Activated B cell treated with CpG ODN at 0.5 μM for 24 hours (primary cell): ENCODE measurements at regions of chr19 and their contacts with region 1.

Region 1: GRCh38 chr19:11435058-11435832 is at the starts of genes ODAD3 and PRKCSH:
- DNase-seq: peak; percentile 95
- ATAC-seq: peak; percentile 88
- H3K4me3 Mint-ChIP-seq: peak within 1 kb of the TSS; percentile 100
- H3K27ac Mint-ChIP-seq: peak within 1 kb of the TSS; percentile 95
- H3K4me1 Mint-ChIP-seq: peaks cover 41% of the 10 kb centered on the region
- H3K27me3 Mint-ChIP-seq: no peaks in the 10 kb centered on the region
- CTCF ChIP-seq: peak; percentile 85
- total RNA-seq, gene ODAD3: 0.29 TPM in 1 of 2 replicates, not detected in the other
- total RNA-seq, gene PRKCSH: 287 and 289 TPM in 2 replicates

Region 2: DNA sequence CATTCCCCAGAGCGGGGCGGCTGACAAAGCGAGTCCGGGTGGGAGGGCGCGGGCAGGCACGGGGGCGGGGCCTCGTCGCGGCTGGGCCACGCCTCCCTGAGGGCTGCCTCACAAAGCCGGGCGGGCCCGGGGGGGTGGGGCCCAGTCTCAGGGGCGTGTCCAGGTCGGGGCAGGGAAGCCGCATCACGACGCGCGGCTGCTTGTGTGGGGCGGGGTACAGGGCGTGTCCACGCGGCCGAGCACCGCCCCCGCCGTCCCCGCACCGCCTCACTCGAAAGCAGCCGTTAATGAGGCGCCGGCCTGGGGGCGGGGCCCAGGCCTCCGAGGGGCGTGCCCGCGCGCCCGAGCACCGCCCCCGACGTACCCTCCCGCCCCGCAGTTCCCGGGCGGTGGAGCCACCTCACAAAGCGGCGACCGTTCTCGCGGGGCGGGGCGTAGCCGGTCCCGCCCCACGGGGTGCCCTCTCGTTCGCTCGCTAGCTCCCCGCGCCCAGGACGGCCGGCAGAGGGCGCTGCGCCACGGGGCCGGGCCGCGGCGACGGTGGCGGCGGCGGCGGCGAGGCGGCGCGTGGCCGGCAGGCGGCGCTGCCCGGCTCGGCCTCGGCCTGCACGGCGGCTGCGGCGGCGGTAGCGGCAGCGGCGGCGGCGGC is 564.2 kb before region 1 on chr19 and contains the start of gene CARM1:
- CTCF ChIA-PET with region 1: no interaction called
- POLR2A ChIA-PET with region 1: no interaction called
- intact Hi-C with region 1: loop called (anchors 2 kb)
- DNase-seq: peak; percentile 100
- ATAC-seq: peak; percentile 84
- H3K4me3 Mint-ChIP-seq: peak within 1 kb of the TSS; percentile 83
- H3K27ac Mint-ChIP-seq: peak within 1 kb of the TSS; percentile 88
- H3K4me1 Mint-ChIP-seq: peaks cover 44% of the 10 kb centered on the region
- H3K27me3 Mint-ChIP-seq: no peaks in the 10 kb centered on the region
- CTCF ChIP-seq: no peak
- total RNA-seq, gene CARM1: 32.3 and 39.1 TPM in 2 replicates

Region 3: GRCh38 chr19:11279496-11280236 is 155.6 kb before region 1 on chr19:
- CTCF ChIA-PET with region 1: no interaction called
- POLR2A ChIA-PET with region 1: interaction called, 13 read pairs
- intact Hi-C with region 1: no loop called
- DNase-seq: no peak
- ATAC-seq: no peak
- H3K4me3 Mint-ChIP-seq: no peak overlapping the region
- H3K27ac Mint-ChIP-seq: no peak overlapping the region
- H3K4me1 Mint-ChIP-seq: peaks cover 6% of the 10 kb centered on the region
- H3K27me3 Mint-ChIP-seq: peaks cover 23% of the 10 kb centered on the region
- CTCF ChIP-seq: no peak

Region 4: DNA sequence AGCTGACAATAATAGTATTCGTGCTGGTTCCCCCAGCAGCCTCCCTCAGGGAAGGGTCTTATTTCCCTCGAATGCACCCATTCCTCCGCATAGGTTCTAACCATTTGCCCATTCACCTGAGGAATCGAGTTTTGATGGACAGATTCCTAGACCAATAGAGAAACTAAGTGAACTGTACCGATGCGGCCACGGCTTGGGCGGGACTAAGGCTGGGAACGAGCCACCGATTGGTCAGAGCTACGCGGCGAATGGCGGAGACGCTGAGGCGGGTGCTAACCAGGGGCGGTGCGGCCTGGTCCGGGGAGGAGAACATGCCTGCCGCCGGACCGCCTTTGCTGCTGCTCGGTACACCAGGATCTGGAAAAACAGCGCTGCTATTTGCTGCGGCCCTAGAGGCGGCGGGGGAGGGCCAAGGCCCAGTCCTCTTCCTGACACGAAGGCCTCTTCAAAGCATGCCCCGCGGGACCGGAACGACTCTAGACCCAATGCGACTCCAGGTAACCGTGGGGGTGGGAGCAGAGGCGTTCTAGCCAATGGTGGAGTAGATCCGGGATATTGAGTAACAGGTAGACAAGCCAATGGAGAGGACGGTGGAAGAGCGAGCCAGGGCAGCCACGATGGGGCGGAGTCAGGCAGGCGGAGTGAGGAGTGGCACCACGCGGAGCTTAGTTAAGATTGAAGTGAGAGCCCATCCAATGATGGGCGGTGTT is 60.7 kb before region 1 on chr19 and contains the start of gene SWSAP1:
- CTCF ChIA-PET with region 1: no interaction called
- POLR2A ChIA-PET with region 1: interaction called, 35 read pairs
- intact Hi-C with region 1: loop called (anchors 1 kb)
- DNase-seq: peak; percentile 93
- ATAC-seq: peak; percentile 89
- H3K4me3 Mint-ChIP-seq: no peak within 1 kb of the TSS
- H3K27ac Mint-ChIP-seq: no peak within 1 kb of the TSS
- H3K4me1 Mint-ChIP-seq: peaks cover 17% of the 10 kb centered on the region
- H3K27me3 Mint-ChIP-seq: no peaks in the 10 kb centered on the region
- CTCF ChIP-seq: no peak
- total RNA-seq, gene SWSAP1: 4.3 and 5.1 TPM in 2 replicates

Region 5: DNA sequence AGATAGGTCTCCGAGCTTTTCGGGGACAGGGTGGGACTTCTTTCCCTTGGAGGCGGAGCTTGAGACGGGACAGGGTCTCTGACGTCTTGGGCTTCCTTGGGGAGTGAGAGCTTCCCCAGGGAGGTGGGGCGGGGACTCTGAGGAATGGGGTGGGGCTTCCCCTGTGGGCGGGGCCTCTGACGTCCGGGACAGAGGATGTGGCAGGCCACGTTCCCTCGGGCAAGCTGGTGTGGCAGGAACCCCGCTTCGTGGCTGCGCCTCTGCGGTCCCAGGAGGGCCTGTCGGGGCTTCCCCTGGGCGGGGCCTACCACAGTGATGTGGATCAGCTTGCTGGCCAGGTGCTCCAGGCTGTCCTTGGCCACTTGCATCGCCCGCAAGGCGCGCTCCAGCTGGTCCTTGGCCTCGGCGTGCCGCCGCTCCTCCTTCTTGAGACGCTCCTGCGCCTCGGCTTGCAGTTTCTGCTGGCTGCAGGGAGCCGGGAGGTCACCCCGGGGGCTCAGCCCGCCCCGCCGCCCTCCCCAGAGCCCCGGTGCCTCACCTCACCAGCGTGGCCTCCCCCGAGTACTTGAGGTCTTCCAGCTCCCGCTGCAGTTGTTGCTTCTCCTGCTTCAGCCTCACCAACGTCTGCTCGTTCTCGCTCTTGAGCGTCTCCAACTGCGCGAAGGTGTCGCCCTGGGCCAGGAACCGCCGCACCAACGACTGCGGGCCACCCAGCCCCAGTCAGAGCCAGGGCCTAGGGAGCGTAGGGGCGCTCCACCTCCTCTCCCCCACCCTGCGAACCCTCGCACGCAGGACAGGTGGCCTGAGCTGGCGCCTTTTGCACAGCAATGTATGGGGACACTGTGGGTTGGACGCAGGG is 12.9 kb before region 1 on chr19:
- CTCF ChIA-PET with region 1: interaction called, 9 read pairs
- POLR2A ChIA-PET with region 1: interaction called, 46 read pairs
- intact Hi-C with region 1: loop called (anchors 1 kb)
- DNase-seq: peak; percentile 89
- ATAC-seq: peak; percentile 84
- H3K4me3 Mint-ChIP-seq: peak overlapping the region; percentile 81
- H3K27ac Mint-ChIP-seq: peak overlapping the region; percentile 66
- H3K4me1 Mint-ChIP-seq: peaks cover 54% of the 10 kb centered on the region
- H3K27me3 Mint-ChIP-seq: peaks cover 18% of the 10 kb centered on the region
- CTCF ChIP-seq: no peak

Region 6: DNA sequence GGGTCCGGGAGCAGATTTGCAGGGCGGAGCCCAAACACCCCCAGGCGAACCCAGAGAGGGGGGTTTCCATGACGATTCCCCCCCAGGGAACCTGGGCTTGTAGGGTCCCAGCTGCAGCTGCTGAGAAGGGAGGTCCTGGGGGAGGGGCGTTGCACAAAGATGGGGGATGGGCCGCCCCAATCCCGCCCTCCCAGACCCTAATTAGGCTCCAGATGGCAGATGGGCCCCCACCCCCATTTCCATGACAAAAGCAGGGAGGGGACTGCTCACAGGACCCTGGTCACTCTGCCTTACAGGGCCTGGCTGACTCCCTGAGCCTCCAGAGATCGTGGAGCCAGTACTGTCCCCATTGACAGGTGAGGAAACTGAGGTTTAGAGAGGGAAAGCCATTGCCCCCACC is 30.4 kb after region 1 on chr19:
- CTCF ChIA-PET with region 1: no interaction called
- POLR2A ChIA-PET with region 1: no interaction called
- intact Hi-C with region 1: no loop called
- DNase-seq: no peak
- ATAC-seq: no peak
- H3K4me3 Mint-ChIP-seq: no peak overlapping the region
- H3K27ac Mint-ChIP-seq: no peak overlapping the region
- H3K4me1 Mint-ChIP-seq: no peaks in the 10 kb centered on the region
- H3K27me3 Mint-ChIP-seq: peaks cover 7% of the 10 kb centered on the region
- CTCF ChIP-seq: no peak

Region 7: GRCh38 chr19:11505032-11505503 is 69.8 kb after region 1 on chr19:
- CTCF ChIA-PET with region 1: no interaction called
- POLR2A ChIA-PET with region 1: no interaction called
- intact Hi-C with region 1: loop called (anchors 1 kb)
- DNase-seq: peak; percentile 97
- ATAC-seq: peak; percentile 93
- H3K4me3 Mint-ChIP-seq: peak overlapping the region; percentile 92
- H3K27ac Mint-ChIP-seq: peak overlapping the region; percentile 95
- H3K4me1 Mint-ChIP-seq: peaks cover 18% of the 10 kb centered on the region
- H3K27me3 Mint-ChIP-seq: no peaks in the 10 kb centered on the region
- CTCF ChIP-seq: no peak

Region 8: GRCh38 chr19:11587302-11587974 is 152.2 kb after region 1 on chr19:
- CTCF ChIA-PET with region 1: no interaction called
- POLR2A ChIA-PET with region 1: no interaction called
- intact Hi-C with region 1: loop called (anchors 5 kb)
- DNase-seq: peak; percentile 76
- ATAC-seq: peak; percentile 81
- H3K4me3 Mint-ChIP-seq: no peak overlapping the region
- H3K27ac Mint-ChIP-seq: peak overlapping the region; percentile 30
- H3K4me1 Mint-ChIP-seq: peaks cover 54% of the 10 kb centered on the region
- H3K27me3 Mint-ChIP-seq: no peaks in the 10 kb centered on the region
- CTCF ChIP-seq: no peak

Region 9: GRCh38 chr19:11722414-11722813 is 287.2 kb after region 1 on chr19:
- CTCF ChIA-PET with region 1: no interaction called
- POLR2A ChIA-PET with region 1: no interaction called
- intact Hi-C with region 1: no loop called
- DNase-seq: no peak
- ATAC-seq: no peak
- H3K4me3 Mint-ChIP-seq: no peak overlapping the region
- H3K27ac Mint-ChIP-seq: no peak overlapping the region
- H3K4me1 Mint-ChIP-seq: no peaks in the 10 kb centered on the region
- H3K27me3 Mint-ChIP-seq: no peaks in the 10 kb centered on the region
- CTCF ChIP-seq: no peak